Activated CD4-positive, alpha-beta T cell treated with anti-CD3 and anti-CD28 coated beads for 36 hours (primary cell): ENCODE measurements at regions of chr11 and their contacts with region 1.

Region 1: GRCh38 chr11:85947431-85948272 is 92.5 kb downstream of the CCDC83 start:
- DNase-seq: peak; percentile 62
- ATAC-seq: peak; percentile 80
- H3K4me3 Mint-ChIP-seq: peak overlapping the region; percentile 46
- H3K27ac Mint-ChIP-seq: peak overlapping the region; percentile 97
- H3K4me1 Mint-ChIP-seq: peaks cover 48% of the 10 kb centered on the region
- H3K27me3 Mint-ChIP-seq: no peaks in the 10 kb centered on the region

Region 2: GRCh38 chr11:85752890-85753581 is 194.6 kb before region 1 on chr11:
- CTCF ChIA-PET with region 1: no interaction called
- POLR2A ChIA-PET with region 1: interaction called, 4 read pairs
- intact Hi-C with region 1: loop called (anchors 1 to 5 kb)
- DNase-seq: peak; percentile 90
- ATAC-seq: peak; percentile 89
- H3K4me3 Mint-ChIP-seq: peak overlapping the region; percentile 47
- H3K27ac Mint-ChIP-seq: peak overlapping the region; percentile 94
- H3K4me1 Mint-ChIP-seq: peaks cover 91% of the 10 kb centered on the region
- H3K27me3 Mint-ChIP-seq: no peaks in the 10 kb centered on the region

Region 3: GRCh38 chr11:86047275-86047991 is 99.8 kb after region 1 on chr11:
- CTCF ChIA-PET with region 1: interaction called, 3 read pairs
- POLR2A ChIA-PET with region 1: interaction called, 3 read pairs
- intact Hi-C with region 1: loop called (anchors 1 kb)
- DNase-seq: peak; percentile 75
- ATAC-seq: peak; percentile 73
- H3K4me3 Mint-ChIP-seq: peak overlapping the region; percentile 65
- H3K27ac Mint-ChIP-seq: peak overlapping the region; percentile 96
- H3K4me1 Mint-ChIP-seq: peaks cover 96% of the 10 kb centered on the region
- H3K27me3 Mint-ChIP-seq: no peaks in the 10 kb centered on the region

Region 4: GRCh38 chr11:86218125-86219084 is 270.8 kb after region 1 on chr11:
- CTCF ChIA-PET with region 1: interaction called, 4 read pairs
- POLR2A ChIA-PET with region 1: interaction called, 4 read pairs
- intact Hi-C with region 1: loop called (anchors 1 to 2 kb)
- DNase-seq: peak; percentile 79
- ATAC-seq: peak; percentile 40
- H3K4me3 Mint-ChIP-seq: peak overlapping the region; percentile 26
- H3K27ac Mint-ChIP-seq: peak overlapping the region; percentile 91
- H3K4me1 Mint-ChIP-seq: peaks cover 78% of the 10 kb centered on the region
- H3K27me3 Mint-ChIP-seq: no peaks in the 10 kb centered on the region

Region 5: DNA sequence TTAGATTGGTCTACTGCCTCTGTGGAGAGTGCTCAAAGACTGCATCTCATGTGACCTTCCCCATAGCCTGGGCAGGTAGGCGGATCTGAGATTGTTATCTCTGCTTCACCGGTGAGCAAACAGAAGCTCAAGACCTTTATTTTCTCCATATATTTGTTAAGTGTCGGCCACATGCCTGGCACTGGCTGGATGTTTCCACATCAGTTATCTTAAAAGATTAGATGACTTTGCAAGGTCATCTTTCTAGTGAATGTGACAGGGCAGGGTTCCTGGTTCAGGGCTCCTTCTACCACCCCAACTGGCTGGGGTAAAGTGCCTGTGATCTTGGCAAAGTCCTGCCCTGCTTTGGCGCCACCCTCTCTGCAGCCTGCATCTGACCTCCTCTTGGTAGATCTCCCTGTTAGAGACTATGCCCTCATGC is 552.1 kb after region 1 on chr11:
- CTCF ChIA-PET with region 1: no interaction called
- POLR2A ChIA-PET with region 1: no interaction called
- intact Hi-C with region 1: loop called in 1 of 2 experiments (anchors 5 kb)
- DNase-seq: no peak
- ATAC-seq: no peak
- H3K4me3 Mint-ChIP-seq: no peak overlapping the region
- H3K27ac Mint-ChIP-seq: no peak overlapping the region
- H3K4me1 Mint-ChIP-seq: peaks cover 2% of the 10 kb centered on the region
- H3K27me3 Mint-ChIP-seq: peaks cover 3% of the 10 kb centered on the region

Region 6: GRCh38 chr11:86740709-86741483 is 793.2 kb after region 1 on chr11:
- CTCF ChIA-PET with region 1: no interaction called
- POLR2A ChIA-PET with region 1: no interaction called
- intact Hi-C with region 1: loop called in 1 of 2 experiments (anchors 5 kb)
- DNase-seq: peak; percentile 60
- ATAC-seq: peak; percentile 52
- H3K4me3 Mint-ChIP-seq: no peak overlapping the region
- H3K27ac Mint-ChIP-seq: peak overlapping the region; percentile 62
- H3K4me1 Mint-ChIP-seq: peaks cover 30% of the 10 kb centered on the region
- H3K27me3 Mint-ChIP-seq: peaks cover 14% of the 10 kb centered on the region